ENCODE measurements at regions of chr1 and their contacts with region 1.

Region 1: DNA sequence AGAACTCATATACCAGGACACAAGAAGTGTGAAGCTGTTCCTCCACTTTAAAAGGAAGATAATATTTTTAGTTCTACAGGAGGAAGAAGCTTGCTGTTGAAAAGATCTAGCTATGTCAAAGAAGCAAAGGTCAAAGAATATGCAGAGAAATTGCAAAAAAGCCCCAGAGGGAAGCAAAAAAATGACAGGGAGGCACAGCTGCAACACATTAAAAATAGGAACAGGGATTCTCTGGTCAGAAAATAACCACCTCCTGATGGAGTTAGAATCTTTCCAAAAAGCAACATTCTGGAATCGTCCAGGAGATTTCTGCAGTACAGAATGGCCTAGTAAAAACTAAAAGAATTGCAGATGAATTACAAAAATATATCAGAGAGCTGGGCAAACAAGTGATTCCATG is 238.9 kb upstream of the PRMT6 start:
- DNase-seq: no peak
- H3K4me3 ChIP-seq: no peak overlapping the region
- CTCF ChIP-seq: no peak
- POLR2A ChIP-seq: no peak

Region 2: GRCh38 chr1:106875622-106876021 is 58.0 kb after region 1 on chr1:
- intact Hi-C with region 1: loop called (anchors 2 kb)
- DNase-seq: no peak
- H3K4me3 ChIP-seq: no peak overlapping the region
- CTCF ChIP-seq: no peak
- POLR2A ChIP-seq: no peak

Measured in lower leg skin (tissue), 4 donors.